ENCODE measurements at regions of chr17 and their contacts with region 1.

Region 1: DNA sequence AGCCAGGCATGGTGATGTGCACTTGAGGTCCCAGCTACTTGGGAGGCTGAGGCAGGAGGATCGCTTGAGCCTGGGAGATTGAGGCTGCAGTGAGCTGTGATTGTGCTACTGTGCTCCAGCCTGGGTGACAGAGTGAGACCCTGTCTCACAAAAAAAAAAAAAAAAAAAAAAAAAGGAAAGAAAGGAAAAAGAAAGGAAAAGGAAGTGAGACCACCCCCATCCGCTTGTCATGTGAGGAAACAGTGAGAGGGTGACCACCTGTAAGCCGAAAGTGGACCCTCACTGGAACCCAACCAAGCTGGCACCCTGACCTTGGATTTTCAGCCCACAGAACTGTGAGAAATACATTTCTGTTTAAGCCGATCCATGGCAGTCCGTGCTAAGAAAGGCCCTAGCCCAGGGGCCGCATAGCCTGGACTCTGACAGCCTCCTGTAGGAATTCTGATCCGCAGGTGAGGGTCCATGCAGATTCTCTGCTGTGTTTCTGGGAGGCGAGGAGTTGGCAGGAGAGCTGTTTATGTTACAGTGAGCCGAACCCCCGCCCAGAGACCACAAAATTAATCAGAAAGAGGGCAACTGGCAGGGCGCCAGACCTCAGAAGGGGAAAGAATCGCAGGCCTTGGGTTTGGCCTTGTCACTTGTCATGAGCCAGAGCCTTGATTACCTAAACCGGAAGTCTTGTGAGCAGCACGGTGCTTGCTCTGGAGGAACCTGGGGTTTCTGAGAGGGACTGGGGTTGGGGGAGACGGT is 945 bp downstream of the SGSH start:
- DNase-seq: peak; percentile 77 to 90 (median 86)
- ATAC-seq: peak; percentile 90
- H3K4me3 ChIP-seq: peak overlapping the region; percentile 84
- H3K4me3 Mint-ChIP-seq: peak overlapping the region; percentile 86 to 96 (median 92)
- H3K27ac ChIP-seq: peak overlapping the region; percentile 93
- H3K27ac Mint-ChIP-seq: peak overlapping the region; percentile 86 to 98 (median 95)
- H3K4me1 ChIP-seq: peaks cover 13 to 30% of the 10 kb centered on the region in 2 donors
- H3K4me1 Mint-ChIP-seq: peaks cover 21 to 40% (median 26%) of the 10 kb centered on the region in 7 donors
- H3K27me3 ChIP-seq: no peaks in the 10 kb centered on the region
- H3K27me3 Mint-ChIP-seq: peaks cover 0 to 3% (median 0%) of the 10 kb centered on the region in 5 donors

Region 2: GRCh38 chr17:80101011-80101945 is 117.9 kb before region 1 on chr17 and contains the start of gene GAA:
- CTCF ChIA-PET with region 1: no interaction called
- POLR2A ChIA-PET with region 1: interaction called, 3 read pairs
- intact Hi-C with region 1: loop called in 1 of 2 experiments (anchors 1 kb)
- DNase-seq: peak; percentile 84 to 97 (median 91)
- ATAC-seq: peak; percentile 97
- H3K4me3 ChIP-seq: peak within 1 kb of the TSS; percentile 79
- H3K4me3 Mint-ChIP-seq: peak within 1 kb of the TSS; percentile 85 to 93 (median 90)
- H3K27ac ChIP-seq: peak within 1 kb of the TSS; percentile 86
- H3K27ac Mint-ChIP-seq: peak within 1 kb of the TSS; percentile 81 to 93 (median 86)
- H3K4me1 ChIP-seq: peaks cover 10 to 16% of the 10 kb centered on the region in 2 donors
- H3K4me1 Mint-ChIP-seq: peaks cover 20 to 30% (median 27%) of the 10 kb centered on the region in 7 donors
- H3K27me3 ChIP-seq: no peaks in the 10 kb centered on the region
- H3K27me3 Mint-ChIP-seq: peaks cover 0 to 10% (median 0%) of the 10 kb centered on the region in 5 donors
- total RNA-seq, gene GAA: 18.5 to 67.8 (median 54.6) TPM